ENCODE measurements at regions of chr16 and their contacts with region 1.

Region 1: GRCh38 chr16:81403616-81404373 is 40.8 kb upstream of the CMIP start:
- DNase-seq: peak; percentile 63 to 82 (median 76)
- H3K4me3 ChIP-seq: no peak overlapping the region
- H3K4me3 Mint-ChIP-seq: peak overlapping the region in 2 of 7 donors; percentile 39 to 56
- H3K27ac ChIP-seq: no peak overlapping the region
- H3K27ac Mint-ChIP-seq: peak overlapping the region in 3 of 8 donors; percentile 68 to 81 (median 77)
- H3K4me1 ChIP-seq: no peaks in the 10 kb centered on the region
- H3K4me1 Mint-ChIP-seq: peaks cover 0 to 5% (median 3%) of the 10 kb centered on the region in 3 donors
- H3K27me3 ChIP-seq: no peaks in the 10 kb centered on the region
- H3K27me3 Mint-ChIP-seq: no peaks in the 10 kb centered on the region

Region 2: DNA sequence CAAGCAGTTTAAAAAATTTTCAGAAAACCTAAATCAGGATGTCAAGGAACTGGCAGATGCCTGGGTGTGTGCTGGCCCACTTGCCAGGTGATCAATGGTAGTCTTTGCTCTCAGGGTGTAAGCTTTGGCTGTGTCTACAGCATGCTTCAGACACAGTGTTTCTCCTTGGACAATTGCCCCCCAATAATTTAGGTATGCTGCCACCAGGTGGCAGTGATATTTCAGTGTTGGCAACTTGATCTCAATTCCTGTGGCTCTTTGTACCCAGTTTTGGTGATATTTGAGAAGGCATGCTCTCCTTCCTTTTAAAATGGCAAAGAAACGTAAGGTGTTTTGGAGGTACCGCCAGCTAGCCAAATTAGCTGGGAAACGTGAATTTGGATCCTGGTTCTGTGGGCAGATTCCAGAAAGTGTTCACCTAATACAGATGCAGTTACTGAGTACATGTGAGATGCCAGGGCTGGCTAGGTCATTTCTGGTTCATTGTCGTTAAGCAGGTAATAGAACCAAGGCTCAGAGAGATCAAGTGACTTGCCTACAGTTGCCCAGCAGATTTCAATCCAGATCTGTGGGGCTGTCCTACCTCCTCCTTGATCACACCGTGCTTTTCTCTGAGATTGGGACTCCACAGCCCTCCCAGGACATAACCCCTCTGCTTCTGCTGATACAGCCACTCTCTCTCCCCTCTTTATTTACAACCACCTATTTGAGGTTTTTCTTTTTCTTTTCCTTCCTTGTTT is 219.7 kb after region 1 on chr16:
- CTCF ChIA-PET with region 1: interaction called, 26 read pairs
- POLR2A ChIA-PET with region 1: no interaction called
- DNase-seq: peak; percentile 24 to 70 (median 35)
- H3K4me3 ChIP-seq: no peak overlapping the region
- H3K4me3 Mint-ChIP-seq: no peak overlapping the region
- H3K27ac ChIP-seq: no peak overlapping the region
- H3K27ac Mint-ChIP-seq: peak overlapping the region in 6 of 8 donors; percentile 27 to 80 (median 62)
- H3K4me1 ChIP-seq: peaks cover 12% of the 10 kb centered on the region
- H3K4me1 Mint-ChIP-seq: peaks cover 5 to 19% (median 6%) of the 10 kb centered on the region in 3 donors
- H3K27me3 ChIP-seq: no peaks in the 10 kb centered on the region
- H3K27me3 Mint-ChIP-seq: no peaks in the 10 kb centered on the region

Region 3: DNA sequence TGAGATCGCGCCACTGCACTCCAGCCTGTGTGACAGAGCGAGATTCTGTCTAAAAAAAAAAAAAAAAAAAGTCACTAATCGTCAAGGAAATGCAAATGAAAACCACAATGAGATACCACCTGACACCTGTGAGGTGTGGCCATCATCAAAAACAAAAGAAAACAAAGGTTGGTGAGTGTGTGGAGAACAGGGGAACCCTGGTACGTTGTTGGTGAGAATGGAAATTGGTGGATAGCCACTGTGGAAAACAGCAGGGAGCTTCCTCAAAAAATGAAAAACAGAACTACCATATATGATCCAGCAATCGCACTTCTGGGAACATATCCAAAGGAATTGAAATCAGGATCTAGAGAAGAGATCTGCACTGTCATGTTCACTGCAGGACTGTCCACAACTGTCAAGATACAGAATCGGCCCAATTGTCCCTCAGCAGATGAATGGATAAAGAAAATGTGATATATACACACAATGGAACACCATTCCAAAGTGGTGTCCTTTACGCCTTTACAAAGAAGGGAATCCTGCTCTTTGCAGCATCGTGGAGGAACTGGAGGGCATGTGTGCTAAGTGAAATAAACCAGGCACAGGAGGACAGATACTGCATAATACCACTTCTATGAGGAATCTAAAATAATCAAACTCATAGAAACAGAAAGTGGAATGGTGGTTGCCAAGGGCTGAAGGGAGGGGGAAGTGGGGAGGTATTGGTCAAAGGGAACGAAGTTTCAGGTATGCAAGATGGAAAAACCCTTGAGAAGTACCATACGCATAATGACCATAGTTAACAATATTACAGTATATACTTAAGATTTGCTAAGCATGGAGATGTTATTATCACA is 311.8 kb after region 1 on chr16:
- CTCF ChIA-PET with region 1: interaction called, 18 read pairs
- POLR2A ChIA-PET with region 1: no interaction called
- DNase-seq: peak in 4 of 5 donors; percentile 12 to 69 (median 61)
- H3K4me3 ChIP-seq: peak overlapping the region; percentile 7
- H3K4me3 Mint-ChIP-seq: peak overlapping the region; percentile 64 to 87 (median 83)
- H3K27ac ChIP-seq: no peak overlapping the region
- H3K27ac Mint-ChIP-seq: peak overlapping the region; percentile 4 to 95 (median 94)
- H3K4me1 ChIP-seq: peaks cover 42% of the 10 kb centered on the region
- H3K4me1 Mint-ChIP-seq: peaks cover 45 to 56% (median 56%) of the 10 kb centered on the region in 3 donors
- H3K27me3 ChIP-seq: no peaks in the 10 kb centered on the region
- H3K27me3 Mint-ChIP-seq: no peaks in the 10 kb centered on the region

Region 4: DNA sequence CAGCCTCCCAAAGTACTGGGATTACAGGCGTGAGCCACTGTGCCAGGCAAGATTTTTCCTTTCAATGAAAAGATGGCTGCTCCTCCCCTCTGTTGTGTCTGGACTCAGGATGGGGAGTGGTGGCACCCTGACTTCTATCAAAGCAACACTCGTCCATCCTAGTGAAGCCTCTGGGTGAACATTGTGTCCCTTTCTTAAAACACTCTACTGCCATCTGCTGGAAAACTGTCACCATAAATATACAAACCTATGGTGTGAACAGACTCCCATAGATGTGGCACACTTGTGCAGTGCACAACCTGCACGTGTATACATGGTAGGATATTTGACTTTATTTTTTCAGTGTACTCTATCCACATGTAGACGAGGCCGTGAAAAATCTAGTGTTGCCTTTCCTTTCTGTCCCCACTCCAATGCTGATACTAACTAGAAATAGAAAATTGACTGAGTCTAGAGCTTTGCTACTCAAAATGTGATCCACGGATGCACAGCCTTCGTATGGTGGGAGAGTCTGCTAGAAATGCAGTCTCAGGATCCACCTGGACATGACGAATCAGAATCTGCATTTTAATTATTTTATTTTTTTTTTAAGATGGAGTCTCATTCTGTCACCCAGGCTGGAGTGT is 319.4 kb after region 1 on chr16:
- CTCF ChIA-PET with region 1: interaction called, 19 read pairs
- POLR2A ChIA-PET with region 1: no interaction called
- DNase-seq: peak in 4 of 5 donors; percentile 18 to 67 (median 66)
- H3K4me3 ChIP-seq: no peak overlapping the region
- H3K4me3 Mint-ChIP-seq: peak overlapping the region in 1 of 7 donors; percentile 5
- H3K27ac ChIP-seq: no peak overlapping the region
- H3K27ac Mint-ChIP-seq: peak overlapping the region in 2 of 8 donors; percentile 37 to 59
- H3K4me1 ChIP-seq: peaks cover 5% of the 10 kb centered on the region
- H3K4me1 Mint-ChIP-seq: peaks cover 11 to 22% (median 19%) of the 10 kb centered on the region in 3 donors
- H3K27me3 ChIP-seq: no peaks in the 10 kb centered on the region
- H3K27me3 Mint-ChIP-seq: peaks cover 0 to 3% of the 10 kb centered on the region in 2 donors

Region 5: GRCh38 chr16:81737885-81738786 is 334.3 kb after region 1 on chr16:
- CTCF ChIA-PET with region 1: interaction called, 17 read pairs
- POLR2A ChIA-PET with region 1: no interaction called
- DNase-seq: peak; percentile 72 to 87 (median 77)
- H3K4me3 ChIP-seq: peak overlapping the region; percentile 44
- H3K4me3 Mint-ChIP-seq: peak overlapping the region; percentile 56 to 85 (median 72)
- H3K27ac ChIP-seq: no peak overlapping the region
- H3K27ac Mint-ChIP-seq: peak overlapping the region in 3 of 8 donors; percentile 33 to 49 (median 42)
- H3K4me1 ChIP-seq: peaks cover 8% of the 10 kb centered on the region
- H3K4me1 Mint-ChIP-seq: peaks cover 4 to 7% (median 7%) of the 10 kb centered on the region in 3 donors
- H3K27me3 ChIP-seq: no peaks in the 10 kb centered on the region
- H3K27me3 Mint-ChIP-seq: peaks cover 0 to 8% of the 10 kb centered on the region in 2 donors